ENCODE measurements at regions of chr2 and their contacts with region 1.

Region 1: GRCh38 chr2:46632349-46632748 is 153.0 kb downstream of the TMEM247 start:
- DNase-seq: no peak
- ATAC-seq: peak; percentile 47
- H3K4me3 Mint-ChIP-seq: no peak overlapping the region
- H3K27ac Mint-ChIP-seq: no peak overlapping the region
- H3K4me1 Mint-ChIP-seq: peaks cover 9% of the 10 kb centered on the region
- H3K27me3 Mint-ChIP-seq: no peaks in the 10 kb centered on the region

Region 2: GRCh38 chr2:46776687-46777327 is 144.5 kb after region 1 on chr2:
- CTCF ChIA-PET with region 1: interaction called, 3 read pairs
- POLR2A ChIA-PET with region 1: no interaction called
- intact Hi-C with region 1: loop called (anchors 1 to 5 kb)
- DNase-seq: peak; percentile 78
- ATAC-seq: no peak
- H3K4me3 Mint-ChIP-seq: no peak overlapping the region
- H3K27ac Mint-ChIP-seq: no peak overlapping the region
- H3K4me1 Mint-ChIP-seq: peaks cover 2% of the 10 kb centered on the region
- H3K27me3 Mint-ChIP-seq: peaks cover 1% of the 10 kb centered on the region

Region 3: GRCh38 chr2:46887028-46887885 is 254.9 kb after region 1 on chr2:
- CTCF ChIA-PET with region 1: no interaction called
- POLR2A ChIA-PET with region 1: no interaction called
- intact Hi-C with region 1: loop called (anchors 1 to 2 kb)
- DNase-seq: no peak
- ATAC-seq: peak; percentile 27
- H3K4me3 Mint-ChIP-seq: no peak overlapping the region
- H3K27ac Mint-ChIP-seq: peak overlapping the region; percentile 15
- H3K4me1 Mint-ChIP-seq: peaks cover 12% of the 10 kb centered on the region
- H3K27me3 Mint-ChIP-seq: peaks cover 5% of the 10 kb centered on the region